ENCODE measurements at regions of chr11 and their contacts with region 1.

Region 1: GRCh38 chr11:57527056-57527631 is 3.4 kb downstream of the TIMM10 start:
- DNase-seq: peak; percentile 81
- H3K4me3 Mint-ChIP-seq: no peak overlapping the region
- H3K27ac Mint-ChIP-seq: peak overlapping the region; percentile 39
- H3K4me1 Mint-ChIP-seq: peaks cover 43% of the 10 kb centered on the region
- H3K27me3 Mint-ChIP-seq: no peaks in the 10 kb centered on the region

Region 2: DNA sequence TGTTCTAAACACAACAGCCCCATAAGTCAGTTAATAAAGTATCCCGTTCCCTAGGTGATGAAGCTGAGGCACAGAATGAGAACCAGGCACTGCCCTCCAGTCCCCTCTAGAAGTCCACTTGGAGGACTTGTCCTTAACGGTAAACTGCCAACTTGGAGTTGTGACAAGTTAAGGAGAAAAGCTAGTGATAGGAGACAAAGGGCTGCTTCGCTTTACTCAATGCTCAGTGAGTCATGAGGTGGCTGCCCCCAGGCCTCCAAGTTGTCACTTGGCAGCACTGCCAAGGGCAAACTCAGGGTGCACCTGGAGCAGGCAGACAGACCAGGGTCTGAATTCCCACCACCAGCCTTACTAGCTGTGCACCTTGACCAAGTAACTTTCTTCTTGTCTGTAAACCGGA is 25.2 kb before region 1 on chr11:
- CTCF ChIA-PET with region 1: interaction called, 14 read pairs
- POLR2A ChIA-PET with region 1: interaction called, 3 read pairs
- DNase-seq: no peak
- H3K4me3 Mint-ChIP-seq: no peak overlapping the region
- H3K27ac Mint-ChIP-seq: no peak overlapping the region
- H3K4me1 Mint-ChIP-seq: peaks cover 7% of the 10 kb centered on the region
- H3K27me3 Mint-ChIP-seq: no peaks in the 10 kb centered on the region

Region 3: DNA sequence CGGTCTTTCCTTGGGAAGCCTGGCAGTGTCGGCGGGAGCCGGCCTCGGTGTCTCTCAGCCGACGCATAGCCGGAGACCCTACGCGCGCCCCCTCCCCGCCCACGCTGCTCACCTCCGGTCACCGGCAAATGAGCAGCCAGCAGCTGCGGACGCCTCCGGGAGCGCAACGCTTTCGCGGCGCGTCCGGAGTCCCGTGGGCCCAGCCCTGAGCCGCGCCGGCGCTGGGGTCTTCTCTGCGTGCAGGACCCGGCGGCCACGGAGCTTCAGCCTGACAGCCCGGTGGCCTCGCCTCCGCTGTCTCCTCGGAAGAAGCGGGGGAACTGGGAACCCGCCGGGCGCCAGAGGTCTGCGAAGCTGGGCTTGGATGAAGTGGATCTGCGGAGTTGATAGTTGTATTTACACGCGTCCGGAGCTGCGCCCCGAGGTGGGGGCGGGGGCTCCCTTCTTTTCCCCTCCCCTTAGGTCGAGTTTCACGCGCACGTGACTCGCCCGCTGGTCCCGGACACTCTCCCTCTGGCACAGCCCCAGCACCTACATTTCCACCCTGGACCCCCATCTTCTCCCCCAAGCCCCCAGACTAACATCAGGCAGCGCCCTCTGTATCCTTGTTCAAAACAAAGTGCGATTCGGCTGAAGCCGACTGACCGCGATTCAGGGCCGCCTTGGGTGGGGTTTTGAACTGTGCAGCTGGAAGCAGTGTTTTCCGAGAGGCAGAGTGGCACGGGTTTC is 11.6 kb before region 1 on chr11 and contains the start of gene SLC43A1:
- CTCF ChIA-PET with region 1: interaction called, 49 read pairs
- POLR2A ChIA-PET with region 1: interaction called, 3 read pairs
- DNase-seq: peak; percentile 36
- H3K4me3 Mint-ChIP-seq: peak within 1 kb of the TSS; percentile 99
- H3K27ac Mint-ChIP-seq: peak within 1 kb of the TSS; percentile 94
- H3K4me1 Mint-ChIP-seq: peaks cover 31% of the 10 kb centered on the region
- H3K27me3 Mint-ChIP-seq: no peaks in the 10 kb centered on the region
- total RNA-seq, gene SLC43A1: 22.9 to 23.4 TPM